IMR-90 (cell line): ENCODE measurements at regions of chr2 and their contacts with region 1.

Region 1: GRCh38 chr2:197378494-197379307 is 56.1 kb downstream of the SF3B1 start:
- DNase-seq: peak; percentile 44
- ATAC-seq: peak; percentile 77
- H3K4me3 ChIP-seq: no peak overlapping the region
- H3K27ac ChIP-seq: no peak overlapping the region
- H3K4me1 ChIP-seq: peaks cover 5% of the 10 kb centered on the region
- H3K27me3 ChIP-seq: no peaks in the 10 kb centered on the region; the same call in 1 of the 2 replicates
- CTCF ChIP-seq: peak; percentile 81
- POLR2A ChIP-seq: no peak
- RAD21 ChIP-seq: peak; percentile 94

Region 2: GRCh38 chr2:196798980-196799379 is 579.7 kb before region 1 on chr2:
- CTCF ChIA-PET with region 1: no interaction called
- POLR2A ChIA-PET with region 1: no interaction called
- dilution Hi-C with region 1: no loop called
- in situ Hi-C with region 1: no loop called
- intact Hi-C with region 1: loop called (anchors 10 kb)
- DNase-seq: no peak
- ATAC-seq: peak; percentile 8; the same call in 1 of the 2 replicates
- H3K4me3 ChIP-seq: peak overlapping the region; percentile 95
- H3K27ac ChIP-seq: peak overlapping the region; percentile 77
- H3K4me1 ChIP-seq: no peaks in the 10 kb centered on the region
- H3K27me3 ChIP-seq: no peaks in the 10 kb centered on the region
- CTCF ChIP-seq: no peak
- POLR2A ChIP-seq: no peak
- RAD21 ChIP-seq: no peak

Region 3: GRCh38 chr2:196849895-196850294 is 528.8 kb before region 1 on chr2:
- CTCF ChIA-PET with region 1: no interaction called
- POLR2A ChIA-PET with region 1: no interaction called
- dilution Hi-C with region 1: no loop called
- in situ Hi-C with region 1: no loop called
- intact Hi-C with region 1: loop called (anchors 1 kb)
- DNase-seq: peak; percentile 45
- ATAC-seq: peak; percentile 89
- H3K4me3 ChIP-seq: no peak overlapping the region
- H3K27ac ChIP-seq: no peak overlapping the region
- H3K4me1 ChIP-seq: no peaks in the 10 kb centered on the region
- H3K27me3 ChIP-seq: no peaks in the 10 kb centered on the region
- CTCF ChIP-seq: peak; percentile 48
- POLR2A ChIP-seq: no peak
- RAD21 ChIP-seq: peak; percentile 58

Region 4: GRCh38 chr2:197011799-197012641 is 366.7 kb before region 1 on chr2:
- CTCF ChIA-PET with region 1: no interaction called
- POLR2A ChIA-PET with region 1: no interaction called
- dilution Hi-C with region 1: no loop called
- in situ Hi-C with region 1: no loop called
- intact Hi-C with region 1: loop called (anchors 1 kb)
- DNase-seq: peak; percentile 53
- ATAC-seq: peak; percentile 74
- H3K4me3 ChIP-seq: no peak overlapping the region
- H3K27ac ChIP-seq: no peak overlapping the region
- H3K4me1 ChIP-seq: no peaks in the 10 kb centered on the region
- H3K27me3 ChIP-seq: no peaks in the 10 kb centered on the region
- CTCF ChIP-seq: peak; percentile 74
- POLR2A ChIP-seq: no peak
- RAD21 ChIP-seq: peak; percentile 76

Region 5: GRCh38 chr2:197191177-197191939 is 187.3 kb before region 1 on chr2:
- CTCF ChIA-PET with region 1: no interaction called
- POLR2A ChIA-PET with region 1: no interaction called
- dilution Hi-C with region 1: no loop called
- in situ Hi-C with region 1: loop called (anchors 5 kb)
- intact Hi-C with region 1: loop called (anchors 1 kb)
- DNase-seq: peak; percentile 28
- ATAC-seq: 0 out of 2 replicates have a peak, but pooled peaks have one; percentile 48
- H3K4me3 ChIP-seq: no peak overlapping the region
- H3K27ac ChIP-seq: no peak overlapping the region
- H3K4me1 ChIP-seq: no peaks in the 10 kb centered on the region
- H3K27me3 ChIP-seq: no peaks in the 10 kb centered on the region
- CTCF ChIP-seq: peak; percentile 66
- POLR2A ChIP-seq: no peak
- RAD21 ChIP-seq: peak; percentile 69

Region 6: DNA sequence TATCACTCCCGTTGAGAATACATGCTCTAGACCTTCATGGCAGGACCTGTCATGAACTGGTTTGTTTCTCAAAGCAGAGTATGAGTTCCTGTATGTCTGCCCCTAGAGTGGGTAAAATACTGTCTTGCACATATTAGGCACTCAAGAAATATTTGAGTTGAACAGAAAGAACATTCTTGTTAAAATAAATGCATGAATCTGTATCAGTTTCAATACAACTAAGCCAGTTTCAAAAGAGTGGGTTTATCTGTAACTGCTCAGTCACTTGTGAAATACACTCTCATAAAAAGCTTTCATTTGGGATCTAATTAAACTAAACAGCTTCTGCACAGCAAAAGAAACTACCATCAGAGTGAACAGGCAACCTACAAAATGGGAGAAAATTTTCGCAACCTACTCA is 227.5 kb after region 1 on chr2:
- CTCF ChIA-PET with region 1: no interaction called
- POLR2A ChIA-PET with region 1: no interaction called
- dilution Hi-C with region 1: no loop called
- in situ Hi-C with region 1: no loop called
- intact Hi-C with region 1: no loop called
- DNase-seq: no peak
- ATAC-seq: no peak
- H3K4me3 ChIP-seq: no peak overlapping the region
- H3K27ac ChIP-seq: no peak overlapping the region
- H3K4me1 ChIP-seq: no peaks in the 10 kb centered on the region
- H3K27me3 ChIP-seq: no peaks in the 10 kb centered on the region
- CTCF ChIP-seq: no peak
- POLR2A ChIP-seq: no peak
- RAD21 ChIP-seq: no peak